Activated CD4-positive, alpha-beta T cell treated with anti-CD3 and anti-CD28 coated beads, Interleukin-2, amount 10 ng/mL, durations not matched to agents 24 days and 14 days (primary cell): ENCODE measurements at regions of chr6 and their contacts with region 1.

Region 1: GRCh38 chr6:142946181-142946923 is 1.4 kb upstream of the HIVEP2 start:
- DNase-seq: peak; percentile 95
- H3K4me3 Mint-ChIP-seq: peak overlapping the region; percentile 93
- H3K27ac Mint-ChIP-seq: peak overlapping the region; percentile 97
- H3K4me1 Mint-ChIP-seq: peaks cover 42% of the 10 kb centered on the region
- H3K27me3 Mint-ChIP-seq: peaks cover 3% of the 10 kb centered on the region

Region 2: DNA sequence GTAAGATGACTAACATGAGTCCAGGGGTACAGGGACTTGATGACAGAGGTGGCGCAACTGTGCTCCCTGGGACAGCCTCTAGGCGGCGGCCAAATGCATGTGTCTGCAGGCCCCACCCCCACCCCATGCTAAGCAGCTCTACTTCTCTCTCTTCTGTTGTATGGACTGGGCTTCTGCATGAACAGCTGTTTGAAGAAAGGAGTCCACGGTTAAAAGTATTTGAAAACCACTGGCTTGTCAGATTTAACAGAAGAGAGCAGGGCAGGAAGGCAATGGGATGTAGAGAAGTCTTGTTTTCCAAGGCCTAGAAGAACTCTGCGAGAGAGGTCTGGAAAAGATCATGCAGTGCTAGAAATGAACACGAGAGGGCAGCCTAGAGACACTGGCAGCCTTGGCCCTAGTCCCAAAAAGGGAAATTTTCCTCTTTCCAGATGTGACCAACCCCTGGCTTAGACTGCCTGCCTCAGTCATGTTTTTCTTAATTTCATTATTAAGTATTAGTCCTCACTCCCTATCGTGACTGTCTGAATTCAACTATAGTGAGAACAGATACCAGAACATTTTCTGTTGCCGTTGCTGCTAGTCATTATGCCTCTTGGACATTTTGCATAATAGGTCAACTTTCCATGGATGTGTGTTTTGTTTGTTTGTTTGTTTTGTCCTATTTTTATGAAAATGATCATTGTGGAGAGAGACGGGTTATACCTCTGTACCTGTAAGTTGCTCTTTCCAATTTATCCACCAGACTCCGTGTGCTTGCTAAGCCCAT is 379.5 kb before region 1 on chr6:
- intact Hi-C with region 1: loop called (anchors 5 kb)
- DNase-seq: peak; percentile 89
- H3K4me3 Mint-ChIP-seq: no peak overlapping the region
- H3K27ac Mint-ChIP-seq: no peak overlapping the region
- H3K4me1 Mint-ChIP-seq: peaks cover 32% of the 10 kb centered on the region
- H3K27me3 Mint-ChIP-seq: no peaks in the 10 kb centered on the region

Region 3: DNA sequence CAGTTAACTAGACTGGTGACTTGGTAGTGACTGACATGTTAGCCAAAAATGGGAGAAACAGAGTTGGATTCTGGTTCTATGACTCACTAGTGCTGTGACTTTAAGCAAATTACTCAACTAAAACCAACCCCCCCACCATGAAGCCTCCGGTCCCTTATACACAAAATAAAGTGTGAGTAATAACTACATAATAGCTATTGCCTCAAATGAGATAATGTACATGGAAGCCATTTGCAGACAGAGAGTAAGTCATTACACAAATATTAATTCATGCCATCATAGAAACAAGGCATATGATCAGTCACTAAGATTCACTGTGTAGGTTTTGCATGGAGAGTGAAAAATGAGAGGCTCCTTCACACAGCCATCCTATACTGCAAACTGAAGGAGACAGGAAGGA is 113.3 kb before region 1 on chr6:
- intact Hi-C with region 1: no loop called
- DNase-seq: no peak
- H3K4me3 Mint-ChIP-seq: no peak overlapping the region
- H3K27ac Mint-ChIP-seq: peak overlapping the region; percentile 23
- H3K4me1 Mint-ChIP-seq: peaks cover 40% of the 10 kb centered on the region
- H3K27me3 Mint-ChIP-seq: no peaks in the 10 kb centered on the region

Region 4: DNA sequence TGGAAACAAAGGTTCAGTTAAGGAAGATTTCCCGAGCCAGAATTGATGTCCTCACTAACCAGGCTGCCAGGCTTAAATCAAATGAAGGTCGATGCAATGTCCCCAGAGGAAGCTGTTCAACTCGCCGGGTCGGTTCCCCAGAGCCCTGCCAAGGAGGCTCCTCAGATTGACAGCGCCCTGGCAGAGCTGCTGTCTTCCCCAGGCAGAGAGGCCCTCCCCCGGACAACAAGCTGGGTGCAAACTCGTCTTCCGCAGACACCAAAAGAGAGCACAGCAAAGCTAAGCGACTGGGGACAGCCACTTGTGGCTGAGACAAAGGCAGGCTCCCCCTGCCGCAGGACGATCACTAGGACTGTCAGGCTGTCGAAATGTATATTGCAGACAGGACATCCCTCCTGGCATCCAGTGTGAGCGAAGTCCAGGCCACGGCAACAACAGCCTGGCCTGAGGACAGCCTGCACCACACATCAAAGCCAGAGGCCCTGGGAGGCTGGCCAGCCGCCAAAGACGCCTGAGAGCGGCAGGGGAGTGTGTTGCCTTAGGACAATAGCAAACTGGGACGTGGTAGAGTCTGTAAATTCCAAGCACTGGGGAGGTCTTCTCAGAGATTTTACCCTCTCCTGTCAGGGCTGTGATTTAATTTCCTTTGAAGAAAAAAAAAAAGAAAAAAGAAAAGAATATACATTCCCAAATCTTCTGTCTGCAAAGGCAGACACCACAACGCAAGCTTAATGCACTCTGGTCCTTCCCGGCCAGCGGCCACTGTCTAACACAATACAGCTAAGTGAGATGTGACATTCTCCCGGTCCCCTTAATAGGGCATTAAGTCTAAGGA is 100.5 kb before region 1 on chr6:
- intact Hi-C with region 1: loop called (anchors 1 kb)
- DNase-seq: peak; percentile 86
- H3K4me3 Mint-ChIP-seq: peak overlapping the region; percentile 78
- H3K27ac Mint-ChIP-seq: peak overlapping the region; percentile 82
- H3K4me1 Mint-ChIP-seq: peaks cover 77% of the 10 kb centered on the region
- H3K27me3 Mint-ChIP-seq: no peaks in the 10 kb centered on the region

Region 5: GRCh38 chr6:142913511-142914047 is 32.8 kb before region 1 on chr6:
- intact Hi-C with region 1: loop called (anchors 1 kb)
- DNase-seq: peak; percentile 92
- H3K4me3 Mint-ChIP-seq: peak overlapping the region; percentile 82
- H3K27ac Mint-ChIP-seq: peak overlapping the region; percentile 94
- H3K4me1 Mint-ChIP-seq: peaks cover 62% of the 10 kb centered on the region
- H3K27me3 Mint-ChIP-seq: no peaks in the 10 kb centered on the region

Region 6: GRCh38 chr6:143060354-143060805 is 114.0 kb after region 1 on chr6:
- intact Hi-C with region 1: loop called (anchors 1 kb)
- DNase-seq: peak; percentile 94
- H3K4me3 Mint-ChIP-seq: peak overlapping the region; percentile 91
- H3K27ac Mint-ChIP-seq: peak overlapping the region; percentile 92
- H3K4me1 Mint-ChIP-seq: peaks cover 23% of the 10 kb centered on the region
- H3K27me3 Mint-ChIP-seq: no peaks in the 10 kb centered on the region

Region 7: DNA sequence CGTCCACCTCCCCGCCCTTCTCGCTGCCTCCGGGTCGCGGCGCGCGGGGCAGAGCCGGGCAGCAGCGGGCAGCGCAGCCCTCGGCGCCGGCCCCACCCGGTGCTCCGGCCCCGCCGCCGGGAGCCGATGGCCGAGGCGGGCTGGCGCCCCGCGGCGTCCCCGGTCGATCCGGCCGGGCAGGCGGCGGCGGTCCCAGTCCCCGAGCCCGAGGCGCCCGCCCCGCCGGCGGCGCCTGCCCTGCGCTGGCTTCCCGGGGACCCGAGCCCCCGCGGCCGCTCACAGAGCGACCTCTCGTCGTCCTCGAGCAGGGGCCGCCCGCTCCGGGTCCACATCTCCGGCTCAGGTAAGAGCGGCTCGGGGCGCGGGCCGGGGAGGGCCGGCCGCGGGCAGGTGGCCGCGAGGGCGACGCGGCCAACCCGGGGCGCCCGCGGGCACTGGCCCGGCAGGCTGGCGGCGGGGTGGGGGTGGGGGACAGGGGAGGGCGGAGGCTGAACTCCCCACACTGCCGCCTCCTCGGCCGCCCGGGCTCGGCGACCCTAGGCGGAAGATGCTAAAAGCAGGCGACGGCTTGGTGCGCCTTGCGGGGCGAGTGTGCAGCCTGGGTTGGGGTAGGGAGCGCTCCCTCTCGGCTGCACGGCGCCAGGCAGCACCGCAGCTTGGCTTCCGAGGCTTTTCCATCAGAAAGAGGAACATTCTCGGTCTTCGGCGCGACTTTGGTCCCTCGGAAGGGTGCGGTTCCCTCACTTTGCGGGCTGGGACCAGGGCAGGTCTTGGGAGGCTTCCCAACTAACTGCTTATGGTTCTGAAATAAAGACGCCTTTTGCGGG is 590.7 kb after region 1 on chr6:
- intact Hi-C with region 1: loop called (anchors 10 kb)
- DNase-seq: peak; percentile 90
- H3K4me3 Mint-ChIP-seq: peak overlapping the region; percentile 88
- H3K27ac Mint-ChIP-seq: peak overlapping the region; percentile 76
- H3K4me1 Mint-ChIP-seq: peaks cover 37% of the 10 kb centered on the region
- H3K27me3 Mint-ChIP-seq: no peaks in the 10 kb centered on the region